A673 (cell line): ENCODE measurements at regions of chr12 and their contacts with region 1.

Region 1: GRCh38 chr12:53159195-53159839 is 21.2 kb upstream of the ZNF740 start:
- DNase-seq: peak; percentile 89
- H3K4me3 ChIP-seq: no peak overlapping the region
- H3K27ac ChIP-seq: peak overlapping the region; percentile 43
- H3K4me1 ChIP-seq: peaks cover 3% of the 10 kb centered on the region
- H3K27me3 ChIP-seq: no peaks in the 10 kb centered on the region
- CTCF ChIP-seq: peak; percentile 99

Region 2: DNA sequence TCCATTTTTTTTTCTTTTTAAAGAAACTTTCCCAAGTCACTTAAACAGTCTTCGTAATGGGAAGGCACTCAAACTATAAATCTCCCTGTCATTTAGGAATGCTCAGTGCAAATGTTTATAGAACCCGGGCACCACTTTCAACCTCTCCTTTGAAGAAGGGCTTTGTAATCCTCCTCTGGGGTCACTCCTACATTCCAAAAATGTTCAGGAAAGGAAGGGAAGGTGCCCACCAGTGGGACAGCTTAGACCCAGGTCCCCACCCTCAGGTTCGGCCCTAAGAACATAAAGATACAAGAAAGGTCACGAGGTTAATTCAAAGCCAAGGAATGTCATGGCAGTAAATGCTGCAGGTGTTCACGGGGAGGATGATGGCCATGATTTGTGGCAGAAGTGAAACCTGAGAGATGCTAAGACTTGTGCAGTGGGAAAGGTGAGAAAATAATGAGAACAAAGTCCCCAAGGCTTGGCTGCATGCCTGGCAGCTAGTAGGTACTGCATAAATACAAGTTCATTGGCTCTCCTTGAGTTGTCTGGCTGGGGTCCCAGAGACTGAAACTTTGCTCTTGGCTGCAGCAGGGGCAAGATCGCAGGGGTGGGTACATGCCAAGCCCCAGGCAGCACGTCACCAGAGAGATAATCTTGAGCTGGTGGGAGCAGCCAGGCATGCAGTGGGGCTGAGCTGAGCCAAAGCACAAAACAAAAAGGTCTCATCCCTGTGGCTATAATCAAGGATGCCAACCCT is 189.3 kb before region 1 on chr12:
- CTCF ChIA-PET with region 1: no interaction called
- POLR2A ChIA-PET with region 1: no interaction called
- intact Hi-C with region 1: no loop called
- DNase-seq: no peak
- H3K4me3 ChIP-seq: no peak overlapping the region
- H3K27ac ChIP-seq: no peak overlapping the region
- H3K4me1 ChIP-seq: peaks cover 17% of the 10 kb centered on the region
- H3K27me3 ChIP-seq: no peaks in the 10 kb centered on the region
- CTCF ChIP-seq: no peak

Region 3: GRCh38 chr12:53197011-53197640 is 37.8 kb after region 1 on chr12:
- CTCF ChIA-PET with region 1: interaction called, 11 read pairs
- POLR2A ChIA-PET with region 1: no interaction called
- intact Hi-C with region 1: no loop called
- DNase-seq: no peak
- H3K4me3 ChIP-seq: no peak overlapping the region
- H3K27ac ChIP-seq: no peak overlapping the region
- H3K4me1 ChIP-seq: no peaks in the 10 kb centered on the region
- H3K27me3 ChIP-seq: no peaks in the 10 kb centered on the region
- CTCF ChIP-seq: no peak

Region 4: DNA sequence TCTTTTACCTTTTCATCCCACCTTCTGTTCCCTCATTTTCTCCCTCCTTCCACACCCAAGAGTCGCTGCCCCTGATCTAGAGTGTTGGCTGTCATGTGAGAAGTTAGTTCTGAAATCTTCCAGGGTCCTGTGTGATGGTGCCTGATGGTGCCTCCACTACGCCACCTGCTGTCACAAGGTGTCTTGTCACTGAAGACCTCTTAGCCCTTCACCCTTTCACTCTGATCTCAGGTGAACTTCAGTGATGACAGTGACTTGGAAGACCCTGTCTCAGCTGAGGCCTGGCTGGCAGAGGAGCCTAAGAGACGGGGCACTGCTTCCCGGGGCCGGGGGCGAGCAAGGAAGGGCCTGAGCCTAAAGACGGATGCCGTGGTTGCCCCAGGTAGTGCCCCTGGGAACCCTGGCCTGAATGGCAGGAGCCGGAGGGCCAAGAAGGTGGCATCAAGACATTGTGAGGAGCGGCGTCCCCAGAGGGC is 128.5 kb after region 1 on chr12:
- CTCF ChIA-PET with region 1: no interaction called
- POLR2A ChIA-PET with region 1: no interaction called
- intact Hi-C with region 1: loop called (anchors 1 kb)
- DNase-seq: peak; percentile 67
- H3K4me3 ChIP-seq: no peak overlapping the region
- H3K27ac ChIP-seq: no peak overlapping the region
- H3K4me1 ChIP-seq: no peaks in the 10 kb centered on the region
- H3K27me3 ChIP-seq: no peaks in the 10 kb centered on the region
- CTCF ChIP-seq: peak; percentile 72